ENCODE measurements at regions of chr3 and their contacts with region 1.

Region 1: DNA sequence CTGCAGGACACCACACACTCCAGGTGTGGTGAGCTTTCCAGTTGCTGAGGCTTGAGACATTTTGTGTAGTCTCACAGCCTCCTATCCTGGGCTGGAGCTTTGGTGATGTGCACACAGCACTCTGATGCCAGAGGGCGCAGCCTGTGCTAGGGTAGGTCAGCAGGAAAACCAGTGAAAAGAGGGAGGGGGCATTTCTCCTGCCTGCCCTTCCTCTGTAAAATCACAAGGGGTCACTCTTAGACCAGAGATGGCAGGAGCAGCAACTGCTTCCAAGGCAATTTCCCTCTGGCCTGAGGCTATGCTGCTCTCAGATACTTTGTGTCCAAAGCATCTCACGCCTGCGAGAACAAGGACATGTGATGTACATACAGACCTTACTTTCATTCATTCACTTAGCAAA is 16.5 kb upstream of the MUSTN1 start:
- H3K4me3 Mint-ChIP-seq: no peak overlapping the region
- H3K27ac Mint-ChIP-seq: no peak overlapping the region
- H3K4me1 Mint-ChIP-seq: peaks cover 6% of the 10 kb centered on the region
- H3K27me3 Mint-ChIP-seq: no peaks in the 10 kb centered on the region

Region 2: DNA sequence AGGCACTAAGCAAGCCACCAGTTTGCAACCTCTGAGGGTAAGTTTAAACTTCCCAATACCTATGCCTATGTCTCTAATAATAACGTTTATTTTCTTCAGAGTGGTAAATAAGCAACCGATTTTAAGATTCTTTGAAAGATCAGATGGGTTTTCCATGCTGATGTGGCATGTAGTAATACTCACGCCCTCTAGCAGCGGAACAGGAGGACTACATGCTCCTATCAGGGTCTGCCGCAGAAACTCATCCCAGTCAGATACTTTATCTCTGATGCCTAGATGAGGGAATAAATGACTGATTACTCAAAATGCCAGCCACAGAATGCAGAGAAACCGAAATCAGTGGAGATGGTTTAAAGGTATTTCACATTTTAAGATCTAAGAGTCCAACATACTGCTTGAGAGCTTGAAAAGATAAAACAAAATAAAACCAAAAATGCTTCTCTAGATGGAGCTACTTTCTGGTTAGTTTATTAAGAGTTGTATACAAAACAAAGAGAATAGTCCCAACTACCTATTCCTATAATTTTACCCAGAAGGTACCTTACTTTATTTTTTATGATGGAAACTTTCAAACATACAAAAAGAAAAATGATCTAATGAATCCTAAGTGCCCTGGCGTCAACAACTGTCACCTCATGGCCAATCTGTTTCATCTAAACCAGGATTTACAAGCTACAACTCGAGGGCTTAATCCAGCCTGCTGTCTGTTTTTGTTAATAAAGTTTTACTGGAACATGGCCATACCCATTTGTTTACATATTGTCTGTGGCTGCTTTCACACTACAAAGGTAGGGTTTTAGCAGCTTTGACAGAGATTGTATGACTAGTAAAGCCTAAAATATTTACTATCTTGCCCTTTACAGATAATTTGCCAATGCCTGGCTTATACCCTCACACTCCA is 83.5 kb after region 1 on chr3:
- intact Hi-C with region 1: loop called (anchors 5 kb)
- H3K4me3 Mint-ChIP-seq: no peak overlapping the region
- H3K27ac Mint-ChIP-seq: no peak overlapping the region
- H3K4me1 Mint-ChIP-seq: peaks cover 5% of the 10 kb centered on the region
- H3K27me3 Mint-ChIP-seq: no peaks in the 10 kb centered on the region

Region 3: GRCh38 chr3:52986938-52987337 is 135.6 kb after region 1 on chr3:
- intact Hi-C with region 1: loop called (anchors 5 kb)
- H3K4me3 Mint-ChIP-seq: no peak overlapping the region
- H3K27ac Mint-ChIP-seq: no peak overlapping the region
- H3K4me1 Mint-ChIP-seq: peaks cover 30% of the 10 kb centered on the region
- H3K27me3 Mint-ChIP-seq: no peaks in the 10 kb centered on the region

Region 4: DNA sequence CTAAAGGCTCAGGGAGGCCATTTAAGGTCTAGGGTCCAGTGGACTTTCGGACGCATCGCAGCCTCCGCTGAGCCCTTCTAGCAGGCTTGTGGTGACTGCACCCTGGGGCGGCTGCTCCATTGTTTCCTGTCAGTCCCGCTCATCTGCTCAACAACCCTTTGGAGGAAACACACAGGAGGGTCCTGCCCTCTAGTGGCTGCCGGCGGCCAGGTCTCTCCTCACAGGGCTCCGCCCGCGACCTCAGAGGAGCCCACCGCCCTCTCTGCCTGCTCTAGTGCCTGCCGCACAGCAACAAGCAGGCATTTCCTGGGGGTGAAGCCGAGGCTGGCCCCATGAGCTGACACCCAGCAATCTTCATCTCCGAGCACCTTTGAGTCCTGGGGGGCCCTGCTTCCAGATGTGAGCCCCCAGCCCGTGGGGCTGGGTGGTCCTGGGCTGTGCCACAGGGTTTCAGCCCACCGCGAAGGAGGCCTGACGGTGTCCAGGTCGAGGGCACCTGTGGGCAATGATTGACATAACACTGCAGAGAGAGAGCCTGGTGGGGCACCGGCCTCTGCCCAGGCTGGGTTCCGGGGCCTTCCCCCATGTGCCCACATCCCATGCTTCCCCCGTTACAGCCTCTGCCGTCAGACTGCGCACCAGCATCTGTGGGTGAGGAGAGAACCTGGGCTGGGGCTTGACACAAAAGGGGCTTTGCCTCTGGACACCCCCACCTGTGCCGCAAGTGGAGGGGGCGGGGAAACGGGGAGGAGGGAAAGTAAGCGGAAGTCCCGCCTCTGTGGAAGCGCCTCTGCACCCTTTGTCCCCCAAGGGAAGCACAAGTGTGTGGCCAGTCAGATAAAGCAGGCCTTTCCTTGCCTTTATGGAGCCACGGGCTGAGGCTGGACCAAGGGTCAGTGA is 221.6 kb after region 1 on chr3:
- intact Hi-C with region 1: loop called (anchors 5 kb)
- H3K4me3 Mint-ChIP-seq: peak overlapping the region; percentile 86
- H3K27ac Mint-ChIP-seq: peak overlapping the region; percentile 88
- H3K4me1 Mint-ChIP-seq: peaks cover 23% of the 10 kb centered on the region
- H3K27me3 Mint-ChIP-seq: peaks cover 3% of the 10 kb centered on the region

Region 5: DNA sequence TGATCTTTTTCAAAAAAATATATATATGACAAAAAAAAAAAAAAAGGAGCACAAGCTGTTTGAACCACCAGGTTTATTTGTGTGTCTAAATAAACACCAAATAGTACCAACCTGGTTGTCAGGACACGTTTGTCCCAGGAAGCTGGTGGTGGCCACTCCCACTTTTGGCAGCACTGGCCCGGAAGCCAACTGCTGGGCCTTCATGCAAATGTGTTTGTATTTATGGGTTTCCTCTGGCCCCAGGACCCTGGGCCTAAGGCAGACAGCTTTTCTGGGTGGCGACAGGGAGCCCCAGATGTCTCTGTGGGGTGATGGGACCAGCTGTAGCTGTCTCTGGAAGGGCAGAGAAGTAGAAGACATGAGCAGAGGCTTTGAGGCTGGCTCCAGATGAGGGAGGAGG is 341.3 kb after region 1 on chr3:
- intact Hi-C with region 1: no loop called
- H3K4me3 Mint-ChIP-seq: no peak overlapping the region
- H3K27ac Mint-ChIP-seq: no peak overlapping the region
- H3K4me1 Mint-ChIP-seq: peaks cover 59% of the 10 kb centered on the region
- H3K27me3 Mint-ChIP-seq: no peaks in the 10 kb centered on the region